HepG2 (cell line): ENCODE measurements at regions of chr6 and their contacts with region 1.

Region 1: DNA sequence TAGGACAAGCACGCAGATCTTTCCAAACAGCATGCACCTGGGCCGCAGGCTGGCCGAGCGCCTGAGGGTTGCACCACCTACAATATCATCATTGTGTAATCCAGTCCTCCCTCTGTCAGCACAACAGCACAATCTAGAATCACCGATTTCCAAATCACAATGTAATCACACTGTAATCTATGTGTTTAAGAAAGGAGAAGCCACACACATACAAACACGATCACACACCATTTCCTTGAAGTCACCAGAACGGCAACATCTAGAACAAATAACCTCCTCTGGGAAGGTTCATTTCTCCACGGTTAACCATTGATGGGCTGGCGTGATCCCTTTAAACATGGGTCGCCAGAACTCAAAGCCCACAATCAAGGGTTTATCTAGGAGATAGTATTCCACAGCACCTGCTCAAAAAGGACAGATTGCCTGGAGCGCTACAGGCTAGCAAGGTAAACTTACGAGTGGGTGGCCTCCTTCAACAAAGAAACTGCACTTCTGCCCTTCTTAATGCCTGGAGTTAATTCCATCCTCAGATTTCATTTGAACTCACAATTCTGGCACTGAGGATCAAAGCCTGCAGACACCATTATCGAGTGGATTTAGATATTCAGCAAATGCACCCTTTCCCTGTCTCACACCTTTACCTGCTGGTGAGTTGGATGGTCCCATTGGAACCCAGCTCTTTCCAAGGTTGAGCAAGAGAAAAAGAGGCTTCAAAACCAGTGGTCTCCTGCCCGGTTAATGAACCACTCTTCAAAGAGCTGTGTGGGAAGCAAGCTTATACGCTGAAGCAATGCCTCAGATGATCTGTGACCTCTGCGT is 83.8 kb upstream of the FOXQ1 start:
- DNase-seq: peak; percentile 99
- ATAC-seq: peak; percentile 89
- H3K4me3 ChIP-seq: peak overlapping the region; percentile 54 to 68 (median 59)
- H3K27ac ChIP-seq: peak overlapping the region; percentile 96
- H3K4me1 ChIP-seq: peaks cover 97% of the 10 kb centered on the region
- H3K27me3 ChIP-seq: no peaks in the 10 kb centered on the region; a peak in 1 of 5 replicates
- CTCF ChIP-seq: 0 out of 2 replicates have a peak, but pooled peaks have one; percentile 3
- EP300 ChIP-seq: peak; percentile 85 to 98
- POLR2A ChIP-seq: peak; percentile 51 to 66; a peak in 3 of 4 replicates
- RAD21 ChIP-seq: peak; percentile 48

Region 2: DNA sequence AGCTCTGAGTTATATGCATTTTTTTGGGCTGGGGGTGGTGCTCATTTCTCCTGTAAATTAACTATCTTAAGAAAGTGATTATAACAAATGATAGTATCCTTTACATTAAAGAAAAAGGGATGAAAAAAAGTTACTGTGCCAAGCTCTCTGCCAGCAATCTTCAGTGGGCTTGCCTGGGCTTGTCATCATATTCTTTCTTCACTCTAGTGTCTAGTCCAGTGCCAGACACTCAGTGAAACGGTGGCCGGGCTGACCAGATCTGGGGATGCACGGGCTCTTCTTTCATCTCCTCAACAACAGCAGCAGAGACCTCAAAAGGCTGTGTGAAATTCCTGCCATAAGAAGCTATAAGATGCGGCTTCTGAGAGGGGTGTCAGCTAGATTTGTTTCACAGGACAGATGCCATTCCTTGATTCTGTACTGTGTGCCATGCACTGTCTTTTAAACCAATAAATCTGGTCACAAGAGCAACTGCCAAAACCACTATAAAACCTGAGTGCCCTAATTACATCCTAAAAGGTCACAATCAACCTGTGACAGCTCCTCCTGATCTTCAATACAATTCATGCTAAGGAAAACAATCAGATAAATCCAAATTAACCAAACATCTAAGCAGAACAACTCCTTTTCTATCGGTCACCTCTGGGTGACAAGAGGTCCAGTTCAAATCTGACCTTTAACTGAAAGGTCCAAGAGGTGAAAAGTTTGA is 547.3 kb before region 1 on chr6:
- CTCF ChIA-PET with region 1: no interaction called
- POLR2A ChIA-PET with region 1: no interaction called
- in situ Hi-C with region 1: no loop called
- intact Hi-C with region 1: no loop called
- DNase-seq: no peak
- ATAC-seq: no peak
- H3K4me3 ChIP-seq: no peak overlapping the region
- H3K27ac ChIP-seq: no peak overlapping the region
- H3K4me1 ChIP-seq: no peaks in the 10 kb centered on the region
- H3K27me3 ChIP-seq: no peaks in the 10 kb centered on the region
- CTCF ChIP-seq: no peak
- EP300 ChIP-seq: no peak
- POLR2A ChIP-seq: no peak
- RAD21 ChIP-seq: no peak

Region 3: DNA sequence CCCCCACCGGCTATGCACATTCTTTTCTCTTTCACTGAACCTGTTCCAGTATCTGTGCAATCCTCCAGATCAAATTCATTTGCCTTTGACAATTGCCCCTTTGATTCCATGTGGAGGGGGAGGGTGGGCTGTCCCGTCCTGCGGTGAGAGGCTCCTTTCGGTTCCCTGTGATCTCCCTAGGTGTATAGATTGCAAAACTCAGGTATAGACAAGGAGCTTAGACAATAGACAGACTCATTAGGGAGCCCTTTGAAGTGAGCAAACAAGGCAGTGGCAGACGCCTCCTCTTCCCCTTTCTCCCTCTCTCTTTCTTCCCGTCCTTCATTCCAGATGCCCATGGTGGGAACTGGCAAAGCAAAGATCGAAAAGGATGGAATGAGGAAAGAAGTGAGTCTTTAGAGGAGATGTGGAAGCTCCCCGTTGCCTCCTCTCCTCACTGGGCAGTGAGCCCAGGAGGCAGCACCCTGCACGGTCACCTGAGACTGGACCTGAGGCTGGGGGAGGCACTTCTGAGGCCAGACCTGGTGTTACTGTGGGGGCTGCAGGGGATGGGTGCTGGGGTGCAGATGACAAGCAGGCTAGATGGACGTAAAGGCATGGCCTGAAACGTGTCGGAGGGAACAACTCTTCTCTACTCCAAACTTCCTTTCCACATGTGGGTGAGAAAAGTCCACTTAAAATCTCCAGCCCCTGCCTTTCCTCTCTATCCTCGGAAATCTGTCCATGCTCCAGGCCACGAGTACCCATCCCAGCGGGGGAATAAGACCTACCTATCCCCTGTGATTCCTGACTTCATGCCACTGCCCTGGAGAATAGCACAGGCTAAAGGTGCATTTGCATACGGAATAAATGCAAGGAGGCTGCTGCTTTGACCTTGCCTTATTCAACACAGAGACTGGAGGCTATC is 172.9 kb before region 1 on chr6:
- CTCF ChIA-PET with region 1: no interaction called
- POLR2A ChIA-PET with region 1: interaction called, 80 read pairs
- in situ Hi-C with region 1: no loop called
- intact Hi-C with region 1: loop called (anchors 1 kb)
- DNase-seq: peak; percentile 100
- ATAC-seq: peak; percentile 80
- H3K4me3 ChIP-seq: peak overlapping the region; percentile 33 to 70 (median 42)
- H3K27ac ChIP-seq: peak overlapping the region; percentile 92
- H3K4me1 ChIP-seq: peaks cover 55% of the 10 kb centered on the region
- H3K27me3 ChIP-seq: no peaks in the 10 kb centered on the region
- CTCF ChIP-seq: no peak
- EP300 ChIP-seq: peak; percentile 99 to 100
- POLR2A ChIP-seq: peak; percentile 59 to 71
- RAD21 ChIP-seq: peak; percentile 27; the same call in 1 of the 2 replicates

Region 4: DNA sequence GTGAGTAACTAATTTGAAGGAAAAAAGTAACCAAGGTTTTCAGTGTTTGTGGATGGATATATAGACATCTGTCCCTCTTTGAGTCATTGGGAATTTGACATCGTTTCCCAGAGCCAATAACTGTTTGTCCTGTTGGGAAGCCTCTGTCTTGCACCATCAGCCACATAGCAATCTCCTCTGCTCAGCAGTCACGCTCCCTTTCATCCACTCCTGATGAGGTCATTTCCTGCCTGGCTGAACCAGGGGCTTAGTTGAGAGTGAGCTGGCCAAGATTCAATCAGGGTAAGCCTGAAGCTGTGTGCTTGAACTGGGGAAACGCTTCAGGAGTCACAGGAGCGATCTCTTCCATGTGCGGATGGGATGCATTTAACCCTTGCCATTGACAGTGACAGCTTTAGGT is 37.8 kb before region 1 on chr6:
- CTCF ChIA-PET with region 1: no interaction called
- POLR2A ChIA-PET with region 1: interaction called, 11 read pairs
- in situ Hi-C with region 1: no loop called
- intact Hi-C with region 1: no loop called
- DNase-seq: peak; percentile 79
- ATAC-seq: peak; percentile 28; the same call in 2 of the 3 replicates
- H3K4me3 ChIP-seq: no peak overlapping the region
- H3K27ac ChIP-seq: no peak overlapping the region
- H3K4me1 ChIP-seq: peaks cover 27% of the 10 kb centered on the region
- H3K27me3 ChIP-seq: no peaks in the 10 kb centered on the region
- CTCF ChIP-seq: no peak
- EP300 ChIP-seq: no peak
- POLR2A ChIP-seq: no peak
- RAD21 ChIP-seq: no peak

Region 5: GRCh38 chr6:1250489-1251197 is 22.5 kb after region 1 on chr6:
- CTCF ChIA-PET with region 1: no interaction called
- POLR2A ChIA-PET with region 1: interaction called, 3 read pairs
- in situ Hi-C with region 1: no loop called
- intact Hi-C with region 1: loop called (anchors 1 kb)
- DNase-seq: no peak
- ATAC-seq: peak; percentile 57
- H3K4me3 ChIP-seq: no peak overlapping the region
- H3K27ac ChIP-seq: no peak overlapping the region
- H3K4me1 ChIP-seq: peaks cover 35% of the 10 kb centered on the region
- H3K27me3 ChIP-seq: no peaks in the 10 kb centered on the region
- CTCF ChIP-seq: no peak
- EP300 ChIP-seq: no peak
- POLR2A ChIP-seq: no peak
- RAD21 ChIP-seq: no peak

Region 6: GRCh38 chr6:1325461-1326309 is 97.5 kb after region 1 on chr6:
- CTCF ChIA-PET with region 1: no interaction called
- POLR2A ChIA-PET with region 1: interaction called, 23 read pairs
- in situ Hi-C with region 1: no loop called
- intact Hi-C with region 1: no loop called
- DNase-seq: peak; percentile 99
- ATAC-seq: peak; percentile 85
- H3K4me3 ChIP-seq: peak overlapping the region; percentile 6 to 34 (median 14); a peak in 2 of 6 replicates
- H3K27ac ChIP-seq: peak overlapping the region; percentile 70
- H3K4me1 ChIP-seq: peaks cover 77% of the 10 kb centered on the region
- H3K27me3 ChIP-seq: no peaks in the 10 kb centered on the region
- CTCF ChIP-seq: no peak
- EP300 ChIP-seq: peak; percentile 81 to 94; a peak in 3 of 4 replicates
- POLR2A ChIP-seq: peak in 1 of 2 experiments; percentile 51; a peak in 1 of 4 replicates
- RAD21 ChIP-seq: no peak

Region 7: DNA sequence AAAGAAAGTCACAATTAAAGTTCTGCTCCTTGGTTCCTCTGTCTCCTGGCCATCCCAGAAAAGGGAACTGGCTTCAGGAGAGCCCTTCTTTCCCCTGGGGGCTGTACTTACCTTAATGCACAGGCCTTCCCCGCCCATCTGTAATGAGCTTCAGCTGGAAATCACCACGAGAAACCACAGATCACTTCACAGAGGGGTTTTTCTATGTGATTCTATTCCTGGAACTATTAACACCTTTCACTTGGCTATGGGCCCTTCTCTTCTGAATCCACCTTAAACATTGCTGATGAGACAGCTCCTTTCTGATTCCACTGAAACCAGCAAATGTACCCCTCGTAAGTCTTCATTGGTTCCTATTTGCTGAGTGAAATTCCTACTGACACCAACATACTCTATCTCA is 241.9 kb after region 1 on chr6:
- CTCF ChIA-PET with region 1: no interaction called
- POLR2A ChIA-PET with region 1: no interaction called
- in situ Hi-C with region 1: no loop called
- intact Hi-C with region 1: no loop called
- DNase-seq: no peak
- ATAC-seq: no peak
- H3K4me3 ChIP-seq: no peak overlapping the region
- H3K27ac ChIP-seq: no peak overlapping the region
- H3K4me1 ChIP-seq: no peaks in the 10 kb centered on the region
- H3K27me3 ChIP-seq: peaks cover 0 to 36% of the 10 kb centered on the region in 2 experiments; a peak in 4 of 5 replicates
- CTCF ChIP-seq: no peak
- EP300 ChIP-seq: no peak
- POLR2A ChIP-seq: no peak
- RAD21 ChIP-seq: no peak